Calu3 (cell line): ENCODE measurements at regions of chr15 and their contacts with region 1.

Region 1: DNA sequence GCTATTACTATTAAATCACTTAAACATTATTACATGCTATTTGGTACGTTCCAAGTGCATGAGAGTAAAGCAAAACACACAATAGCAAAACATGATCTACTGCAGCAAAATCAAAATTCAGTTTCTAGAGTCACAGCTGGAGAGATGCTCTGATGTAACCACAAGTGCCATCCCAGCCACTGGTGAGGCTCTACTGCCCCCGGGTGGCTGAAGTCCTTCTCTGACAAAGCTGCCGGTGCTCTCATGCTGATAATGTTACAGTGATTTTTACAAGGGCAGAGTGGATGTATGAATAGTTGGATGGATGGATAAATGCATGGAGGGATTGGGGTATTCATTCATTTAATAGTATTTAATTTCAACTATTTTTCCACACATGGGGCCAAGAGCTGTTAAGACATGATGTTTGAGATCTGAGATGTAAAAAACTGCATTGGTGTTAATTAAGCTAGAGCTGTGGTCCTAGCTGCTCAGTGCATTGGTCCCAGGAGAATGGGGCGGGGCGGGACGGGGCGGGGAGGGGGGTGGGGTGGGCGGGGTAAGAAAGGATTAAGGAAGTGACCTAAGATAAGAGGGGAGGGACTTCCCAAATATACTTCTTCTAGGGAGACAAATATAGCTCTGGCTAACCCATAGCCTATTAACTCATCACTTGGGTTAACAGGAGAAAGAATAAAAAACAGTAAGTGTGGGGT is 5.3 kb upstream of the SPESP1 start:
- DNase-seq: peak; percentile 87
- H3K4me3 Mint-ChIP-seq: no peak overlapping the region
- H3K27ac Mint-ChIP-seq: no peak overlapping the region
- H3K4me1 Mint-ChIP-seq: no peaks in the 10 kb centered on the region
- H3K27me3 Mint-ChIP-seq: peaks cover 60% of the 10 kb centered on the region
- CTCF ChIP-seq: peak; percentile 90

Region 2: GRCh38 chr15:68550481-68551295 is 374.3 kb before region 1 on chr15:
- CTCF ChIA-PET with region 1: interaction called, 10 read pairs
- intact Hi-C with region 1: loop called (anchors 2 kb)
- DNase-seq: peak; percentile 85
- H3K4me3 Mint-ChIP-seq: no peak overlapping the region
- H3K27ac Mint-ChIP-seq: no peak overlapping the region
- H3K4me1 Mint-ChIP-seq: no peaks in the 10 kb centered on the region
- H3K27me3 Mint-ChIP-seq: peaks cover 72% of the 10 kb centered on the region
- CTCF ChIP-seq: peak; percentile 95

Region 3: DNA sequence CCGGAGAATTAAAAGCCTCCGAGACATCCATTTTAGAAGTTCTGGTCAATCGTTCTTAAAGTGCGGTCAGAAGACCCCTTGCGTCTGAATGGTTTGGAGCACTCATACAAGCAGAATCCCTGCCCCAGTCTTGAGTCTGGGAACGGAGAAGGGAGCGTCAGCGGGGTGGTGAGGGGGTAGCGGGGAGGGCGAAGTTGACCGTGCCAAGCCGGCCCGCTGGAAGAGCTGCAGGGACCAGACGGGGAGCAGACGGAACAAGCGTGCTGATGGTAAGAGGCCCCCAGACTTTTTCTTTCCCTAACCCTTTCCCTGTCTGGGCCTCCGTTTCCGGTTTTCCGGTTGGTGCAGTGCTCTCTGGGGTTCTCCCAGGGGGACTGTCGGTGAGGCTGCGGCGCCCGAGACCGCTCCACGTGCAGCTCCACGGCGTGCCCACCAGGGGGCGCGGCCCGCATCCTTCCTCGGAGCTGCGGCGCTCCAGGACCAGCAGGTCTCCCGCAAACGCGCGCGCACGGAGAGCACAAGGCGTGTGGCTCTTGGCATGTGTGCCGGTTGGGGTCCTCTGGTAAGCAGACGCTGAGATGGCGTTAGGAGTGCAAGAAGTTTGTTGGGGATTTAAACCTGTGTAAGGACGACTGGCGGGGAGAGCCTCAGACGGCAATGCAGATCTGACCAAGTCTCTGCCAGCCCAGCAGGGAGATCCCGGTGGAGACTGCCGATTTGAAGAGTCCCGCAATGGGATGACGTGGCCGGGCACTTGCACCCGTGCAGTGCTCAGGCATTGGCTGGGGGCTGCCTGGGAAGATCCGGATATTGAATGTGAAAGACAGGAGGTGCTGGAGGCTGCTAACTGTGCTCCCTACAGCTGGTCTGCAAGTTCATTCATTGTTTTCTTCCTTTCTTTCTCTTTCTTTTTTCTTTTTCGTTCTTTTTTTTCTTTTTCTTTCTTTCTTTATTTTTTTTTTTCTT is 365.4 kb before region 1 on chr15:
- CTCF ChIA-PET with region 1: interaction called, 11 read pairs
- intact Hi-C with region 1: loop called (anchors 2 kb)
- DNase-seq: peak; percentile 90
- H3K4me3 Mint-ChIP-seq: peak overlapping the region; percentile 78
- H3K27ac Mint-ChIP-seq: no peak overlapping the region
- H3K4me1 Mint-ChIP-seq: peaks cover 23% of the 10 kb centered on the region
- H3K27me3 Mint-ChIP-seq: peaks cover 90% of the 10 kb centered on the region
- CTCF ChIP-seq: peak; percentile 91

Region 4: DNA sequence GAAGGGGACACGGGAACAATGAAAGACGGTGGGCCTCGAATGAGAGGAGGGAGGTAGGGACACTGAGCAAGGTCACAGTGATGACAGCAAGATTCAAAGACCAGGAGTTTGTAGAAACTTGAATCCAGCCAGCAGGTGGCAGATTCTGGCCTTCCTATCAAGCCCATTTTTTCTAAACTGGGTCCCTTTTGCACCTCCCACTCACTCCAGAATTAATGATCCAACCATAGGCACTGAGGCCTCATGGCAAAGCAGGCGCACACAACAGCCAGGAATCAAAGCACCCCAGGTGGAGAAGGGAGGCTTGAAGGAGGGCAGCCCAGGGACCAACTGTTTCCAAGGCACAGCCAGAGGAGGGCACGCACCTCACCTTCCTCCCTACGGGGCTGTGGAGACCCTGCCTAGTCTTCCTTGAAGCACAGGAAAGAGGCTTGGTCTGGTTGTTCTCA is 194.5 kb before region 1 on chr15:
- CTCF ChIA-PET with region 1: interaction called, 3 read pairs
- intact Hi-C with region 1: loop called (anchors 1 kb)
- DNase-seq: peak; percentile 30
- H3K4me3 Mint-ChIP-seq: no peak overlapping the region
- H3K27ac Mint-ChIP-seq: no peak overlapping the region
- H3K4me1 Mint-ChIP-seq: no peaks in the 10 kb centered on the region
- H3K27me3 Mint-ChIP-seq: peaks cover 49% of the 10 kb centered on the region
- CTCF ChIP-seq: peak; percentile 39

Region 5: GRCh38 chr15:68885070-68885469 is 39.9 kb before region 1 on chr15:
- CTCF ChIA-PET with region 1: no interaction called
- intact Hi-C with region 1: loop called (anchors 5 kb)
- DNase-seq: peak; percentile 37
- H3K4me3 Mint-ChIP-seq: no peak overlapping the region
- H3K27ac Mint-ChIP-seq: no peak overlapping the region
- H3K4me1 Mint-ChIP-seq: no peaks in the 10 kb centered on the region
- H3K27me3 Mint-ChIP-seq: peaks cover under 1% of the 10 kb centered on the region
- CTCF ChIP-seq: no peak